ENCODE measurements at regions of chr16 and their contacts with region 1.

Region 1: GRCh38 chr16:46853713-46854443 is 22.9 kb upstream of the C16orf87 start:
- DNase-seq: peak; percentile 79

Region 2: DNA sequence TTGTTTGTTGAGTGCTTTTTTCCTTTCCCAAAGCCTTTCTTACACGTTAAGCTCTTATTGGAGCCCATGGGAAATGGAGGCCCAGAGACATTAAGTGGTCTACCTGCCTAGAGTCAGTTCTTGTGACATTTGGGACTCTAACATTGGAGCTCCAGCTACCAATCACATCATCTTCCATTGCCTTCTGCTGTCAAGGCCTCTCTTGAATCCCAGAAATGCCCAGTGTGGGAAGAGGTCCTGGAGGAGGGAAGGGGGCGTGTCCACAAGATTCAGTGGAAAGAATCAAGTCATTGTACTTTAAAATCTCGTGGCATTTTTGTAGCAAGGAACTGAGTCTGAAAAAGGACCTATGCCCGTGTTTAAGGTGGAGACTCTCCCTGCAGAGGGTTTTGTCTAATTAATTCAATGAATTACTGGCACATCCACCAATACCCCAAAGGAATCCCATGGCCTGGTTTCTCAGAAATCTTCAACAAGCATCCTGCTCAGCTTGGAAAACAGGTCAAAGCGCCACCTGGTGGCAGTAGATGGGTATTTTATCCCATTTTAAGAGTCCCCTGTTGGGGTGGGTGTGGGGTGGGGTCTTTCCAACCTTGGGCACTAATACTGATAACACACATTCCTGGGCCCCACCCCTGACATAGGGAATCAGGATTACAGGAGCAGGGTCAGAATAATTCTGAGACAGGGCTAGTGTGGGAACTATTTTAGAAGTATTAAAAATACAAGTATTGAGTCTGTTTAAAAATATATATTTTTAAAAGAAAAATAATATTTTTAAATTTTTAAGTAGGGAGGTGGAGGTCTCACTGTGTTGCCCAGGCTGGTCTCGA is 54.9 kb after region 1 on chr16:
- CTCF ChIA-PET with region 1: interaction called, 28 read pairs
- POLR2A ChIA-PET with region 1: interaction called, 4 read pairs
- DNase-seq: peak; percentile 75

Region 3: DNA sequence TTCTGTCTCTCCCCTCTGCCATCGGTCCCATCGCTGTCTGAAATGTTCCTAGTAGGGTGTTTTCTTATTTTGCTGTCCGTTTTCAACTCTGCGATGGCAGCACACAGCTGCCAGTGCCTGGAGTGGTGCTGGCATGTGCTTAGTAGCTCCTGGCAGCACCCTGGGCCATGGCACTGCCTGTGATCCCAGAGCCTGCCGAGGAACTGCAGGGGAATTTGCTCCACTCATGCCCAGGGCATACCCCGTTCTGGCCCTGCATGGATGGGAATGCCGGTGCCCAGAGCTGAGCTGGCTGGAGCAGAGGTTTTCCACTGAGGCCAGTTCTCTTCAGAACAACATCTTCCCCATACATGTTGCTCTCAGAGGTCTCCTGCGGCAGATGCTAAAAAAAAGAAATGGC is 73.4 kb after region 1 on chr16:
- CTCF ChIA-PET with region 1: interaction called, 11 read pairs
- POLR2A ChIA-PET with region 1: no interaction called
- DNase-seq: no peak

Measured in HEK293T (cell line).